Activated CD4-positive, alpha-beta memory T cell treated with anti-CD3 and anti-CD28 coated beads for 36 hours (primary cell): ENCODE measurements at regions of chr4 and their contacts with region 1.

Region 1: DNA sequence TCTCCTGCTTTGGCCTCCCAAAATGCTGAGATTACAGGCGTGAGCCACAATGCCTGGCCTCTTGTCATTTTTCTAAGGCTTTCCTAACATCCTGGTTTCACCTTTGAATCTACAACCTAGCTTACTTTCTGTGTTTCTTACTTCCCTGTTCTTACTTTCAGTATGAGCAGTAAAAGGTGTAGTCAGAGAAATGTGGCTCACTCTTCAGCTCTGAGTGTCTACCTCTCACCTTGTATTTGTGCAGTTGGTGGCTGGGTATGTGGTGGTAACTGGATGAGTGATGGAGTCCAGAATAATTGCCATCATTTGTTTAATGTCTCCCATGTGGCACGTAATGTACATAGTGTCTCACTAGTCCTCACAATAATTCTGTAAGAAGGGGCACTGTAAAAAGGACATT is 19.1 kb upstream of the CXCL11 start:
- DNase-seq: peak; percentile 56
- H3K4me3 Mint-ChIP-seq: no peak overlapping the region
- H3K27ac Mint-ChIP-seq: peak overlapping the region; percentile 49
- H3K4me1 Mint-ChIP-seq: peaks cover 41% of the 10 kb centered on the region
- H3K27me3 Mint-ChIP-seq: peaks cover 18% of the 10 kb centered on the region

Region 2: DNA sequence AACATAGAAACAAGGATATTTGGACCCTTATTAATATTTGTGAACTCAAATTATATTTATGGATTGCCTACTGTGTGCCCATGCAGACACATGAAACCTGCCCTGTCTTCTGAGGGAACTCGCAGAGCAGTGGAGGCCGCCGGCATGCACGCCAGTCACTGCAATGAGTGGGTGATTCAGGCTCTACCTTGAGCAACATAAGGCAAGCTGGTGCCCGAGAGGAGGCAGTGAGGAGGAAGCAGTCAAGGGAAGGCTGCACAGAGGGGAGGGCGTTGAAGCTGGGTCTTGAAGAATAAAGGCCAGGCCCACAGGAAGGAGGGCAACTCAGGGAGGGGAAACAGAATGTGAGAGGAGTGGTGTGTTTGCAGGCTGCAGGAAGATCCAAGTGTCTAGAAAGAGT is 205.6 kb before region 1 on chr4:
- CTCF ChIA-PET with region 1: no interaction called
- POLR2A ChIA-PET with region 1: no interaction called
- intact Hi-C with region 1: loop called (anchors 2 kb)
- DNase-seq: peak; percentile 12
- H3K4me3 Mint-ChIP-seq: no peak overlapping the region
- H3K27ac Mint-ChIP-seq: no peak overlapping the region
- H3K4me1 Mint-ChIP-seq: peaks cover 14% of the 10 kb centered on the region
- H3K27me3 Mint-ChIP-seq: peaks cover 7% of the 10 kb centered on the region

Region 3: DNA sequence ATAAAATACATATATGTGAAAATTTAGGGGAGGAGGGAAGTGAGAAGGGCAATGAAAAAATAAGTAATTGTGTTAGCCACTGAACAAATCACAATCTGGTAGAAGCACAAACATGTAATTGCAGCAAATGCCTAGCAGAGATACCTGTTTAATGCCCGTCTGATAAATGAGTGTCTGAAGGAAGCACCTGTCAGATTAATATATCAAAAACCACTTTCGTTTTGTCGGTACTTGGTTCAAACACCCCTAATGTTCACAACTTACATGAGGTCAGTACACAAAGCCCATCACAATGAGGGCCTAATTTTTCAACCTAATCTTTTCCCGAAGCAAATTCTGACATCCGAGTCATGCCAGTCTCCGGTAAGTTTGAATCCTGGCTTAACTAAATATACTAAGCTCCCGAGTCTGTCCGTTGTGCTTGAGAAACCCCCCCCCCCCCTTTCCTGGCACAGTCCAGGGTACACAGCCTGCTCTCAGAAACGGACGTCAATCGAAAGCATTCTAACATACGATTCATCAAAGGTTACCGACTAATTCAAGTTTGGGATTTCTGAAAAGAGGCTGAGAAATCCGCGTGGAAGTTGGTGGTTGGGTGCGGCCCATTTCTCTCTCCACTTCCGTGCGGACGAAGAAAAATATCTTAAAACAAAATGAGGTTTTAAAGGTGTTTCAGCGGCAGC is 65.0 kb before region 1 on chr4:
- CTCF ChIA-PET with region 1: interaction called, 38 read pairs
- POLR2A ChIA-PET with region 1: interaction called, 4 read pairs
- intact Hi-C with region 1: loop called (anchors 2 kb)
- DNase-seq: no peak
- H3K4me3 Mint-ChIP-seq: peak overlapping the region; percentile 85
- H3K27ac Mint-ChIP-seq: peak overlapping the region; percentile 57
- H3K4me1 Mint-ChIP-seq: peaks cover 29% of the 10 kb centered on the region
- H3K27me3 Mint-ChIP-seq: peaks cover 3% of the 10 kb centered on the region

Region 4: DNA sequence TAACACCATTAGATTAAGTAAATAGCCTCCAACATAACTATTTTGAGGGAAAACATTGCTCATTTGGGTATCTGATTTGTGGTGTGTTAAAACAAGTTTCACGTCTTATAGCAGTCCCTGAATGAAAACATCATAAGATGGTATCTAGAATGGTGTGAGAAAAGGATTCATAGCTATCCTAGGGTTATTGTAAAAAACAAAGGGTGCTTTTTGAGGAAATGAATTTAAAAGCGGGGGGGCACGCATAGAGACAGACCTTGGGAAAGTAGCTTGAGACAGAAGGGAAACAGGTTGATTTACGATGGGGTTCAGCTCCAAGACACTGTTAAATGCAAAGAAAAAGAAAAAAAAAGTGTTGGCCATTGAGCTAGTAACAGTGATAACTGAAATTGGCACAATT is 31.0 kb before region 1 on chr4:
- CTCF ChIA-PET with region 1: interaction called, 8 read pairs
- POLR2A ChIA-PET with region 1: interaction called, 11 read pairs
- intact Hi-C with region 1: loop called (anchors 1 kb)
- DNase-seq: no peak
- H3K4me3 Mint-ChIP-seq: no peak overlapping the region
- H3K27ac Mint-ChIP-seq: no peak overlapping the region
- H3K4me1 Mint-ChIP-seq: peaks cover 42% of the 10 kb centered on the region
- H3K27me3 Mint-ChIP-seq: no peaks in the 10 kb centered on the region

Region 5: DNA sequence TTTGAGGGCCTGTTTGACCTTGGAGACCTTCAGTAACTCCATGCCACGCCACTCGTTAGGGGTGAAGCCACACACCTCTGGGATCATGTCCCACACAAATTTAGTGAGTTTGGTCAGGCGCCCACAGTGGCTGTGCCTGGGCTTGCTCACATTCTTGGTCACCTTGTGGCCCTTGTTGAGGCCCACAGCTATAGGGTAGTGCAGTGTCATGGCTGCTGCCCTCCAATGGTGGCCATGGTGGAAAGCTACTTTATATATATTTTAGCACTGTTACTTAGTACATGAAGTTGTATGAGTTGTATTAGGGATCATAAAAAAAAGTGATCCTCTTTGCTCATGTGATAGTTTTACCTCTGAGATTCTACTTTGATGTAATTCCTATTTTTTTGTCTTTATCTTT is 18.2 kb before region 1 on chr4:
- CTCF ChIA-PET with region 1: interaction called, 4 read pairs
- POLR2A ChIA-PET with region 1: no interaction called
- intact Hi-C with region 1: loop called (anchors 1 kb)
- DNase-seq: no peak
- H3K4me3 Mint-ChIP-seq: no peak overlapping the region
- H3K27ac Mint-ChIP-seq: no peak overlapping the region
- H3K4me1 Mint-ChIP-seq: peaks cover 3% of the 10 kb centered on the region
- H3K27me3 Mint-ChIP-seq: no peaks in the 10 kb centered on the region

Region 6: DNA sequence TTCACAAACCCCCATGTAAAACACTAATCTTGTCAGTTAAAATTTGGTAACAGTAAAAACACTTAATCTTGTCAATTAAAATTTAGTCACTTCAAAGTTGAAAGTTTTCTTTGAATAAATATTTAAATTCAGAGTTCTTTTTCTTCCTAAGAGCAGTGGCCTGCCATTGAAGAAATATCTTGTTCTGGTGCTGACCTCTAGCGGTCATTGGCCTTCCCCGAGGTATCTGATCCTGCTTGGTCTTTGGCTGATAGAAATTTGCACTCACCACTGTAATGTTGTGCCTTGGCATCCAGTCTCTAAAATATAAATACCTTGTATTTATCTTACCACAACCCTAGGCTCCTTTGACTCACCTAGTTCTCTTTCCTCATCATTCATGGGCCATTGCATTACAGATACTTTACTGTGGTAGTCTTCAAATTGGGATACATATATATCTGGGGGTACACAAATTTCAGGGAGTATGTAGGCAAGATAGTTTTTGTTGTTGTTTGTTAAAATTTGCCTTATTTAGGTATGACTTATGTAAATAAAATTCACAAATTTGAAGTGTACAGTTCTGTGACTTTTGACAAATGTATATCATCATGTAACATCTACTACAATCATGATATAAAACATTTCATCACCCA is 12.8 kb after region 1 on chr4:
- CTCF ChIA-PET with region 1: interaction called, 15 read pairs
- POLR2A ChIA-PET with region 1: no interaction called
- intact Hi-C with region 1: no loop called
- DNase-seq: peak; percentile 79
- H3K4me3 Mint-ChIP-seq: no peak overlapping the region
- H3K27ac Mint-ChIP-seq: no peak overlapping the region
- H3K4me1 Mint-ChIP-seq: no peaks in the 10 kb centered on the region
- H3K27me3 Mint-ChIP-seq: no peaks in the 10 kb centered on the region

Region 7: DNA sequence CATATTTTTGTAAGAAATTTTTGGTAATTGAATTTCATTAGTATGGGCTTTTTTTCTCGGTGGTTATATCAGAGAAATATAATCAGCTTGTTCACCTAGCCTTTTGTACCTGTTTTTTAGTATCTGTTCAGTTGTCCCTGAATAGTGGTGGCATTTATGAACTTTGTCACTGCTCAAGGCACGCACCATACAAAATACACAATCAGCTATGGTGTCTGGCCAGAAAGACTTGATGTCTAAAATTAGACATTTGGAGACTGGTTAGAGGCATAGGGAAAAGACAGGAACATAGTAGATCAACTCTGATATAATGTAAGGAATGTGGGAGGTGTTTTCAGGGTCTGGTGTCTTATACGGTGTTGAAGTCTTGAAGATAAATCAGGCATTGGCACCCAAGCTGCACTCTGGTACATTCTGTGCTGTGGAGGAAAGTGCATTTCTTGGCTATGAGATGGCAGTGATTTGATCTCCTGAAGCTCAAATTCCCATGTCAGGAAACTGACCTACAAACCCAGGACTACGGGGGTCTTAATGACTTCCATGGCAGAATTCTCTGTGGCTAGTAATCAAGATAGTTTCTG is 23.1 kb after region 1 on chr4:
- CTCF ChIA-PET with region 1: no interaction called
- POLR2A ChIA-PET with region 1: no interaction called
- intact Hi-C with region 1: no loop called
- DNase-seq: no peak
- H3K4me3 Mint-ChIP-seq: no peak overlapping the region
- H3K27ac Mint-ChIP-seq: no peak overlapping the region
- H3K4me1 Mint-ChIP-seq: no peaks in the 10 kb centered on the region
- H3K27me3 Mint-ChIP-seq: peaks cover 3% of the 10 kb centered on the region

Region 8: DNA sequence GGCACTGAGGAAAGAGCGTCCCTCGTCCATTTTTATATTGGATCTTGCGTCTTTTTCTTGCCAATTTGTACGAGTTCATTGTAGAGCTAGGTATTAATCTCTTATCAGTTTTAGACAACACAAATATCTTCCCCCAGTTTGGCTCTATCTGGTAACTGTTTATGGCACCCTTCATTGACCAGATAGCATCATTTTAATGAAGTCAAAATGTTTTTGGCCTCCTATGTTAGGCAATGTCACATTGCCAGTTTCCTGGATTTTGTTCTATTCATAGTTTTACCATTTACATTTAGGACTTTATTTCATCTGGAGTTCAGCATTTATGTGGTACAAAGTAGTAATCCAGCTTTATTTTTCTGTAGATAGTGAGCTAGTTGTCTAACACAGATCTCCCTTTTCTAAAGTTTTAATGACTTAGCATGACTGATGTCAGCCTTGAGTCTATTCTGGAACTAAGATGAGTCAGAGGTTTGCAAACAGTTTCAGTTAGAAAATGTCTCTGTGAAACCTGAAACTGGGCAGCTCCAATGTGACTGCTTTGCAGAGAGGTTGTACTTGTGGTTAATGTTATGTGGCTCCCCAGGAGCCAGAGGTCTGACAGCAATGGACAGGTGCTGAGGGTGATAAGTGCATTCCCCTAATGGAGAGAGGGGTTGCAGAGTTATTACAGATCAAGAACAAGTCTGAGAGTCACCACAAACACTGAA is 246.2 kb after region 1 on chr4:
- CTCF ChIA-PET with region 1: no interaction called
- POLR2A ChIA-PET with region 1: no interaction called
- intact Hi-C with region 1: loop called (anchors 2 kb)
- DNase-seq: peak; percentile 66
- H3K4me3 Mint-ChIP-seq: no peak overlapping the region
- H3K27ac Mint-ChIP-seq: no peak overlapping the region
- H3K4me1 Mint-ChIP-seq: peaks cover 35% of the 10 kb centered on the region
- H3K27me3 Mint-ChIP-seq: peaks cover 3% of the 10 kb centered on the region

Region 9: GRCh38 chr4:76504613-76505465 is 449.8 kb after region 1 on chr4:
- CTCF ChIA-PET with region 1: no interaction called
- POLR2A ChIA-PET with region 1: no interaction called
- intact Hi-C with region 1: no loop called
- DNase-seq: no peak
- H3K4me3 Mint-ChIP-seq: no peak overlapping the region
- H3K27ac Mint-ChIP-seq: no peak overlapping the region
- H3K4me1 Mint-ChIP-seq: no peaks in the 10 kb centered on the region
- H3K27me3 Mint-ChIP-seq: peaks cover 4% of the 10 kb centered on the region